ENCODE measurements at regions of chr7 and their contacts with region 1.

Region 1: GRCh38 chr7:105013221-105013815 is 687 bp upstream of the KMT2E start:
- DNase-seq: peak; percentile 93 to 98 (median 96)
- ATAC-seq: peak; percentile 68
- H3K4me3 ChIP-seq: peak overlapping the region; percentile 99
- H3K4me3 Mint-ChIP-seq: peak overlapping the region; percentile 96 to 100 (median 98)
- H3K27ac ChIP-seq: peak overlapping the region; percentile 97
- H3K27ac Mint-ChIP-seq: peak overlapping the region; percentile 99 to 100 (median 100)
- H3K4me1 ChIP-seq: peaks cover 14 to 24% of the 10 kb centered on the region in 2 donors
- H3K4me1 Mint-ChIP-seq: peaks cover 31 to 50% (median 41%) of the 10 kb centered on the region in 7 donors
- H3K27me3 ChIP-seq: no peaks in the 10 kb centered on the region
- H3K27me3 Mint-ChIP-seq: peaks cover 0 to 8% (median 0%) of the 10 kb centered on the region in 5 donors

Region 2: DNA sequence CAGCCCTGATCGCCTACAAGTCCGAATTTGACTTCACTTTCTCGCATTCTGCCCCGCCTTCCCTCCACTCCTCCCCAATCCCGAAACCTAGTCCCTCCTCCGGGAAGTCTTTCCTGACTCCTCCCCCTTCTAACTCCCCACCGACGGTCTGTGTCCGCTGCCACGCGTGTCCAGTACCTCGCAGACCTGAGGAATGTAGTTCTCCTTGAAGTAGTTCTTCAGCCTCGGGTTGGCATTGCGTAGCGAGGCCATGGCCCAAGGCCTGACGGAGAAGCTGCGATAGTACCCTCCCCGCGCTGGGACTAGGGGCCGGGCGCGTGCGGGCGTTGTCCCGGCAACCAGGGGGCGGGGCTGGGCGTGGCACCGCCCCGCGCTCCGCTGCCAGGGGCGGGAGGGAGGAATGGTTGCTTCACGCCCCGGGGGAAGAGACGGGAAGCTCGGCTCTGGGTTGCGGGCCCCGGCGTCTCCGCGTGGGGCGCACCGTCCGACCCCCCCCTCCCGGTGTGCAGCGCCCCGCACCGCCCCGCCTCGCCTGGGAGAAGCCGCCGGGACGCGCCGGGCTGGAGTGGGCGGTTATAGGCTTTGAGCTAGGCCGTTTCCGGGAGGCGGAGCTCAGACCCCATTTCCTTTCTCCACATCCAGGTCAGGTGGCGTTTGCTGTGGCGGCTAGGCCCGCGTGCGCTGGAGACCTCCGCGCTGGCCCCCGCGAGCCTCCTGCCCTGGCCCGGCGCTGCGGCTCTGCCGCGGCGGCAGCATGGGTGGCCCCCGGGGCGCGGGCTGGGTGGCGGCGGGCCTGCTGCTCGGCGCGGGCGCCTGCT is 1938.6 kb before region 1 on chr7 and contains the starts of genes ARMC10 and FBXL13:
- CTCF ChIA-PET with region 1: no interaction called
- POLR2A ChIA-PET with region 1: no interaction called
- intact Hi-C with region 1: loop called in 1 of 2 experiments (anchors 2 kb)
- DNase-seq: peak; percentile 86 to 93 (median 88)
- ATAC-seq: peak; percentile 93
- H3K4me3 ChIP-seq: peak within 1 kb of the TSS; percentile 77
- H3K4me3 Mint-ChIP-seq: peak within 1 kb of the TSS; percentile 94 to 100 (median 97)
- H3K27ac ChIP-seq: peak within 1 kb of the TSS; percentile 81
- H3K27ac Mint-ChIP-seq: peak within 1 kb of the TSS; percentile 85 to 98 (median 93)
- H3K4me1 ChIP-seq: peaks cover 14 to 18% of the 10 kb centered on the region in 2 donors
- H3K4me1 Mint-ChIP-seq: peaks cover 21 to 53% (median 47%) of the 10 kb centered on the region in 7 donors
- H3K27me3 ChIP-seq: no peaks in the 10 kb centered on the region
- H3K27me3 Mint-ChIP-seq: peaks cover 0 to 2% (median 0%) of the 10 kb centered on the region in 5 donors
- total RNA-seq, gene ARMC10: 13.6 to 36.4 (median 27.5) TPM
- total RNA-seq, gene FBXL13: 0.44 to 1.9 (median 1.2) TPM

Region 3: GRCh38 chr7:104723001-104723400 is 290.3 kb before region 1 on chr7:
- CTCF ChIA-PET with region 1: no interaction called
- POLR2A ChIA-PET with region 1: no interaction called
- intact Hi-C with region 1: no loop called
- DNase-seq: no peak
- ATAC-seq: no peak
- H3K4me3 ChIP-seq: no peak overlapping the region
- H3K4me3 Mint-ChIP-seq: no peak overlapping the region
- H3K27ac ChIP-seq: no peak overlapping the region
- H3K27ac Mint-ChIP-seq: no peak overlapping the region
- H3K4me1 ChIP-seq: no peaks in the 10 kb centered on the region
- H3K4me1 Mint-ChIP-seq: no peaks in the 10 kb centered on the region
- H3K27me3 ChIP-seq: no peaks in the 10 kb centered on the region
- H3K27me3 Mint-ChIP-seq: peaks cover 0 to 9% (median 4%) of the 10 kb centered on the region in 5 donors

Region 4: DNA sequence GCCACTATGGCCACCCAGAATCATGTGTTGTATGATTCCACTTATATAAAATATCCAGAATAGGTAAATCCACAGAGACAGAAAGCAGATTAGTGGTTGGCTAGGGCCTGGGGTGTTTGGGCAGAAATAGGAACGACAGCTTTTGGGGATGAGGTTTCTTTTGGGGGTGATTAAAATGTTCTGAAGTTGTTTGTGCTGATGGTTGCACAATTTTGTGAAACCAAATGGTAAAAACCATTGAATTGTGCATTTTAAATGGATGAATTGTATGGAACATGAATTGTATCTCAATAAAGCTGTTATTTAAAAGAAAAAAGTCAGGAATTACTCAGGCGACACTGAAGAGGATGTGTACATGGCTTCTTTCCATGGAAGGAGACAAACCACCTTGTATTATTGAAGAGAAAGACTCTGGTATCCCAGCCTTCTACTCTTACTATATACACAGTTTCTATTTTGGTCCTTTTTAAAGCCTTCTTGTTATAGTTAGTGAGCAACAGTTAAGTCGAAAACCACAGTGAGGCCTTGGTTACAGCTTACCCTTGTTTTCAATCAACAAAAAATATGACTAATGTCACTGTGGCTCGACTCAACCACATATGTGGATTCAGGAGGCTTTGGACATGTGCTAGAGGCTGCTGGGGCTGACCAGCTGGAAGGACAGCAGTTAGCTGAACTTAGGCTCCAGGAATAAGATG is 56.4 kb before region 1 on chr7:
- CTCF ChIA-PET with region 1: no interaction called
- POLR2A ChIA-PET with region 1: no interaction called
- intact Hi-C with region 1: loop called in 1 of 2 experiments (anchors 1 kb)
- DNase-seq: peak in 1 of 9 donors; percentile 61
- ATAC-seq: peak; percentile 80
- H3K4me3 ChIP-seq: no peak overlapping the region
- H3K4me3 Mint-ChIP-seq: peak overlapping the region in 1 of 10 donors; percentile 59
- H3K27ac ChIP-seq: no peak overlapping the region
- H3K27ac Mint-ChIP-seq: peak overlapping the region in 5 of 9 donors; percentile 38 to 99 (median 60)
- H3K4me1 ChIP-seq: peaks cover 0 to 19% of the 10 kb centered on the region in 2 donors
- H3K4me1 Mint-ChIP-seq: peaks cover 4 to 61% (median 6%) of the 10 kb centered on the region in 7 donors
- H3K27me3 ChIP-seq: no peaks in the 10 kb centered on the region
- H3K27me3 Mint-ChIP-seq: no peaks in the 10 kb centered on the region

Region 5: GRCh38 chr7:105036217-105037168 is 23.2 kb after region 1 on chr7:
- CTCF ChIA-PET with region 1: interaction called, 4 read pairs
- POLR2A ChIA-PET with region 1: interaction called, 44 read pairs
- intact Hi-C with region 1: loop called (anchors 1 to 2 kb)
- DNase-seq: no peak
- ATAC-seq: peak; percentile 19
- H3K4me3 ChIP-seq: no peak overlapping the region
- H3K4me3 Mint-ChIP-seq: peak overlapping the region in 8 of 10 donors; percentile 6 to 74 (median 44)
- H3K27ac ChIP-seq: no peak overlapping the region
- H3K27ac Mint-ChIP-seq: peak overlapping the region in 7 of 9 donors; percentile 18 to 70 (median 41)
- H3K4me1 ChIP-seq: peaks cover 31 to 35% of the 10 kb centered on the region in 2 donors
- H3K4me1 Mint-ChIP-seq: peaks cover 29 to 77% (median 63%) of the 10 kb centered on the region in 7 donors
- H3K27me3 ChIP-seq: no peaks in the 10 kb centered on the region
- H3K27me3 Mint-ChIP-seq: no peaks in the 10 kb centered on the region

Region 6: DNA sequence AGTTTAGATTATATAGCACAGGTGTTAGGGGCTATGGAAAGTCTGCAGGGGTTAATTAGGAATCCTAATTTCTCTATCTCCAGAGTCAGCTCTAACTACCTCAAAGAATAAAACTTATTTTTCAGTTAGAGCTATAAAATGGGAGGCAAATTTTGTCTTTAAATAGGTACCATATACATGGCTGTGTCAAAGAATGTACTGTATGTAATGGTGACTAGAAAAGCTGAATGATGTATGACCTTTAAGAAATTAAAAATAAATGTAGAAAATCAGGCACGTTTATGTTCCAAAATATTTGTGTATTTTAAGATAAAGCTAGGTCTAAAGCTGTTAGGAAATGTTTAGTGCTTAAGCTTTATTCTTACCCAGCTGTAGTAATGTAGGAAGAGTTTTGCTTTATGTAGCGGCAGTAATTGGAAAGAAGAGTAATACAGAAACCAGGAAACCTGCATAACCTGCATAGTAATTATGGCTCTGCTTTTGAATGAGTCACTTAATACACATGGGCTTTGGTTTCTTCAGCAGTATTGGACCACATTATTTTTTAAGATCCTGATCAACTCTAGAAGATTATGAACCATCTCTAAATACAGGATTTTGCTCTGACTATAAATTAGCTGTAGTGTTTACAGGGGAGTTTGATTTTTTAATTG is 85.7 kb after region 1 on chr7:
- CTCF ChIA-PET with region 1: no interaction called
- POLR2A ChIA-PET with region 1: no interaction called
- intact Hi-C with region 1: loop called in 1 of 2 experiments (anchors 2 kb)
- DNase-seq: no peak
- ATAC-seq: no peak
- H3K4me3 ChIP-seq: no peak overlapping the region
- H3K4me3 Mint-ChIP-seq: peak overlapping the region in 1 of 10 donors; percentile 7
- H3K27ac ChIP-seq: no peak overlapping the region
- H3K27ac Mint-ChIP-seq: peak overlapping the region in 8 of 9 donors; percentile 37 to 87 (median 73)
- H3K4me1 ChIP-seq: peaks cover 0 to 3% of the 10 kb centered on the region in 2 donors
- H3K4me1 Mint-ChIP-seq: peaks cover 5 to 56% (median 39%) of the 10 kb centered on the region in 7 donors
- H3K27me3 ChIP-seq: no peaks in the 10 kb centered on the region
- H3K27me3 Mint-ChIP-seq: no peaks in the 10 kb centered on the region

Region 7: GRCh38 chr7:106022193-106022821 is 1009.0 kb after region 1 on chr7:
- CTCF ChIA-PET with region 1: no interaction called
- POLR2A ChIA-PET with region 1: no interaction called
- intact Hi-C with region 1: loop called in 1 of 2 experiments (anchors 1 kb)
- DNase-seq: peak; percentile 38 to 96 (median 93)
- ATAC-seq: peak; percentile 89
- H3K4me3 ChIP-seq: peak overlapping the region; percentile 23
- H3K4me3 Mint-ChIP-seq: peak overlapping the region; percentile 43 to 82 (median 68)
- H3K27ac ChIP-seq: peak overlapping the region; percentile 87
- H3K27ac Mint-ChIP-seq: peak overlapping the region; percentile 86 to 99 (median 98)
- H3K4me1 ChIP-seq: peaks cover 30 to 76% of the 10 kb centered on the region in 2 donors
- H3K4me1 Mint-ChIP-seq: peaks cover 23 to 89% (median 85%) of the 10 kb centered on the region in 7 donors
- H3K27me3 ChIP-seq: no peaks in the 10 kb centered on the region
- H3K27me3 Mint-ChIP-seq: peaks cover 0 to 15% (median 0%) of the 10 kb centered on the region in 5 donors

Measured in naive thymus-derived CD4-positive, alpha-beta T cell (primary cell).